Activated naive CD4-positive, alpha-beta T cell treated with anti-CD3 and anti-CD28 coated beads for 36 hours (primary cell): ENCODE measurements at regions of chr14 and their contacts with region 1.

Region 1: GRCh38 chr14:77097700-77098528 is at the start of gene CIPC:
- DNase-seq: peak; percentile 100
- H3K4me3 Mint-ChIP-seq: peak within 1 kb of the TSS; percentile 88
- H3K27ac Mint-ChIP-seq: peak within 1 kb of the TSS; percentile 96
- H3K4me1 Mint-ChIP-seq: peaks cover 38% of the 10 kb centered on the region
- H3K27me3 Mint-ChIP-seq: no peaks in the 10 kb centered on the region
- total RNA-seq, gene CIPC: 5.6 to 6.1 TPM

Region 2: GRCh38 chr14:76151398-76152339 is 946.2 kb before region 1 on chr14 and contains the start of gene GPATCH2L:
- CTCF ChIA-PET with region 1: no interaction called
- intact Hi-C with region 1: loop called (anchors 5 kb)
- DNase-seq: peak; percentile 99
- H3K4me3 Mint-ChIP-seq: peak within 1 kb of the TSS; percentile 98
- H3K27ac Mint-ChIP-seq: peak within 1 kb of the TSS; percentile 97
- H3K4me1 Mint-ChIP-seq: peaks cover 48% of the 10 kb centered on the region
- H3K27me3 Mint-ChIP-seq: no peaks in the 10 kb centered on the region
- total RNA-seq, gene GPATCH2L: 40.0 to 43.4 TPM

Region 3: DNA sequence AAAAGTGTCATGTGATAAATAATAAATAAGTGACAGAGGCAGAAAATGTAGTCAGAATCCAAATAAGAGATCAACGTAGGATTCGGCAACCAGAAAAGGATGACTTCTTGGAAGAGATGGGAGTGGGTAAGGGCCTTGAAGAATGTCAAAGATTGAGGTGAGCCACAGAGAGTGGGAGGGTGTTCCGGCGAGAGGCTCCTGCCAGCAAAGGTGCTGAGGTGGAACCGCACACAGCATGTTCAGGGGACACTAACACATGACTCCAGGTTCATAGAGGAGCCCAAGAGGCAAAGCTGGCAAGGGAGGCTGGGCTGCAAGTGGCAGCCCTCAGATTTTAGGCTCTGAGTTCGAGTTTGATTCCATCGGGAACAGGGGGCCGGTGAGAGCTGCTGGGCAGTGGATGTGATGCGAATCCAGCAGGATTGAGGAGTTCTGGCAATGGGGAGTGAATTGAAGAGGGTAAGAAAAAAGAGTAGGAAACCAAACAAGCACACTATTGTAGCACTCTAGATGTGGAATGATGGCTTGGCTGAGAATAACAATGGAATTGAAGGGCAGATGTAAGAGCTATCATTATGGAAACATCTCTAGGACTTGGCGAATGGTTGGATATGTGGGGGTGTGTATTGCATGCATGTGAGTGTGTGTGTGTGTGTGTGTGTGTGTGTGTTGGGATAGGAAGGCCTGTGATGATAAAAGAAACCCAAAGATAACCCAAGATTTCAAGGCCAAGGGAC is 235.2 kb before region 1 on chr14:
- CTCF ChIA-PET with region 1: no interaction called
- intact Hi-C with region 1: no loop called
- DNase-seq: no peak
- H3K4me3 Mint-ChIP-seq: no peak overlapping the region
- H3K27ac Mint-ChIP-seq: no peak overlapping the region
- H3K4me1 Mint-ChIP-seq: peaks cover 26% of the 10 kb centered on the region
- H3K27me3 Mint-ChIP-seq: no peaks in the 10 kb centered on the region

Region 4: GRCh38 chr14:76876076-76876475 is 221.8 kb before region 1 on chr14:
- CTCF ChIA-PET with region 1: interaction called, 215 read pairs
- intact Hi-C with region 1: loop called (anchors 1 kb)
- DNase-seq: peak; percentile 55
- H3K4me3 Mint-ChIP-seq: no peak overlapping the region
- H3K27ac Mint-ChIP-seq: no peak overlapping the region
- H3K4me1 Mint-ChIP-seq: no peaks in the 10 kb centered on the region
- H3K27me3 Mint-ChIP-seq: no peaks in the 10 kb centered on the region

Region 5: DNA sequence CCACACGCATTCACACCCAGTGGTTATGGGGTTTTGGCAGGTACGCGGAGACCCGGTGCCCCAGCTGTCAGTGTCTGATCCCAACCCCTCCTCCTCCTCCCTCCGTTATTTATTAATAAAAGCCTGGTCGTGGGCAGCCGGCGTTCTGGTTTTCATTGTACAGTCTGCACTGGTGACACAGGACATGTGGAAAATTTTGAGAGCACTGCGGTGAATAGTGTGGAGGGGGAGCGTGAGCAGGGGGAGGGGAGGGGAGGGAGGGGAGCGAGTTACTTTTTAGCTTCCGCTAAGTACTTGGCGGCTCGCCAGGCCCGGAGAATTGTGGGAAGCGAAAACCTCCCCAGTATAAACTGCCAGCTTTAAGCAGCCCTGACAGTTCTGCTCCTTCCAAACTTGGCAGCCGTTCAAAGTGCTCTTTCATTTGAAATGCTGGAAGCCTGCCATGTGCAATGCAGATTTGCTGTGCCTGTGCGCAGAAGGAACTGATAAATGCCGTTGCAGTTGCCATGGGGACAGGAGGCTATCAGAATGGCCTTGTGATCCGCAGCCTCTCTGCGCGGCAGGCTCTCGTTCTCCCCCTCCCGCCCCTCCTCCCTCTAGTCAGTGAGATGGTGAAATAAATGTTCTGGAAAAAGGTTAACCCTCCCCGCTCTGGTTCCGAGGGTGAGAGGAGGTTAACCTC is 57.7 kb before region 1 on chr14:
- CTCF ChIA-PET with region 1: interaction called, 3 read pairs
- intact Hi-C with region 1: loop called (anchors 1 kb)
- DNase-seq: peak; percentile 99
- H3K4me3 Mint-ChIP-seq: peak overlapping the region; percentile 77
- H3K27ac Mint-ChIP-seq: peak overlapping the region; percentile 99
- H3K4me1 Mint-ChIP-seq: peaks cover 88% of the 10 kb centered on the region
- H3K27me3 Mint-ChIP-seq: no peaks in the 10 kb centered on the region

Region 6: DNA sequence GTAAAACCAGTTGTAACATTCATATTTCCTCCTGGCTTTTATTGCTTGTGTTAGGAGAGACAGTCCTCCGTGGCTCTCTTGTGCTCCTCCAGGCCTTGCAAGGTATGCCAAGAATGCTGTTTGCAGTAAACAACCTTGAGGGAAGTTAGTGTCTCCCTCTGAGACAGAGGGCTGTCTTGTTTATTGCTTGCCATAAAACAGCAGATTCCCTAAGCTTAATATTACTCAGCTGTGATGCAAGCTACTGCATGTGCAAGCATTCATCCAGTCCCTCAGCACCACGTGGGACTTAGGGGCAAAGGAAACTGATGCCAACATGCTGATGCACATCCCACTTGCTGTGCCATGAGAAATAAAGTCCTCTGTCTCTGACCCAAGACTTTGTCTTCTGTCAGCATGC is 216.1 kb after region 1 on chr14:
- CTCF ChIA-PET with region 1: interaction called, 4 read pairs
- intact Hi-C with region 1: loop called (anchors 1 kb)
- DNase-seq: no peak
- H3K4me3 Mint-ChIP-seq: no peak overlapping the region
- H3K27ac Mint-ChIP-seq: no peak overlapping the region
- H3K4me1 Mint-ChIP-seq: no peaks in the 10 kb centered on the region
- H3K27me3 Mint-ChIP-seq: no peaks in the 10 kb centered on the region

Region 7: DNA sequence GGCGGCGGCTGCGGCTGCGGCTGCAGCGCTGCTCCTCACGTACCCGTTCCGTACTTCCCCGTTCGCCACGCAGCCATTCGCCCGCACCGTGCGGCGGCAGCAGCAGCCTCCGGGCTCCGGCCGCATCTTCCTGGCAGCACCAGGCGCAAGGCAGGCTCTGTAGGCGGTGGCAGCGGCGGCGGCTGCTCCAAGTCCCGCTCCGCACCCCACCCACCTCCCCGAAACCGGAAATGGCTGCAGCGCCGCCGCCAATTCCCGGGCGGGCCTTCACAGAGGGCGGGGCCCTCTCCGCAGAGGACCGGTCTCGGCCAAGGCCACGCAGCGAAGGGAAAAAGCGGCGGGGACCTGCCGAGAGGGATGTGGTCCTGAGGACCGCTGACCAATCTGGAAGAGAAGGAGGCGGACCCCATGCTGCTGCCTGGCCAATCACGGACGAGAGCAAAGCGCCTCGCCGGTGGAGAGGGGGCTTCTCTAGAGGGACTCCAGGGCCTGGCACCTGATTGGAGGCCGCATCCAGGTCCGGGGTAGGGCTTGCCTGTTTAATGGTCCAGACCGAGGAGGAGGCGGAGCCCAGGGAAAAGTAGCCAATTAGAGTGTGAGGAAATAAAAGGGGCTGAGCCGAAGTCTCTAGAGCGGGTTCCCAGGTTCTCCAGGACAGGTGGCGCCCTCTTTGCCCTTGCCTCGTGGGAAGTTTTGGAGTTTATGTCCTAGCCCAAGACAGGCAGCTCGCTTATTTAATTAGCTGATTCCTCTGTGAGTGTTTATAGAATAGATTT is 518.7 kb after region 1 on chr14 and contains the start of gene SPTLC2:
- CTCF ChIA-PET with region 1: no interaction called
- intact Hi-C with region 1: loop called (anchors 2 kb)
- DNase-seq: peak; percentile 96
- H3K4me3 Mint-ChIP-seq: peak within 1 kb of the TSS; percentile 90
- H3K27ac Mint-ChIP-seq: peak within 1 kb of the TSS; percentile 79
- H3K4me1 Mint-ChIP-seq: peaks cover 32% of the 10 kb centered on the region
- H3K27me3 Mint-ChIP-seq: no peaks in the 10 kb centered on the region
- total RNA-seq, gene SPTLC2: 16.1 to 18.1 TPM